Panc1 (cell line): ENCODE measurements at regions of chr10 and their contacts with region 1.

Region 1: DNA sequence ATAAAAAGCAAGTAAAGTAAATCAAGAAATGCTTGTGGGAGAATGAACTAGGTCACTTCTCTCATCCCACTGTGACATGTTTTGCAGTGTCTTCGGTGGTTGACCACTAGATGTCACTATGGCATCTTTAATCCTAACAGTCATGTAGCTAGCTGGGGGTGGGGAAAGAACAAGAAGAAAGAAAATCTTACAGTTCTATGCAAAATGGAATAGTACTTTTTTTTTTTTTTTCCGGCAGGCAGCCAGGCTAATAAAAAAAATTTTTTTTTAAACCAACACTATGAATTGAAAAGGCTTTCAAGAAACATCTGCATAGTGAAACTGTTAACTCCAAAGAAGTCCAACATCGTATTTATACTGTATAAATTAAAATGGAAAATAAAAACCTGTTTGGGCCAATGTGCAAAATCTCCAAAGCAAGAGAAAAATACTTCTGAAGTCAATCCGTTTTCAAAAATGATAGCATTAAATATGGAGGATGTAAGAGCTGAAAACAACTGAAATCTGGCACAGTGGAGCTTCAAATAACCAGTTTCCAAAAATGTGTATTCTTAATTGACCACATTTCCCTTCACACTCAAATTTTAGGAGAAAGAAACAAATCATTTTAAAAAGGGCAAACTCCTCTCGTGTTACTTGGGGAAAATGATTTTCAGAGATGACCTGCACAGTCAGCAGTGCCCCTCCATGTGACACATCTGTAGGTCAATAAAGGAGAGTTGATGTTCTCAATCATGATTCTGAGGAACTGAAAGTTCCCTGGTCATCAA is 38.5 kb downstream of the CDK1 start:
- DNase-seq: peak; percentile 72
- ATAC-seq: peak; percentile 90
- H3K4me3 ChIP-seq: no peak overlapping the region
- H3K27ac ChIP-seq: peak overlapping the region; percentile 44; the same call in 1 of the 2 replicates
- H3K4me1 ChIP-seq: peaks cover 3% of the 10 kb centered on the region; the same call in 1 of the 2 replicates
- H3K27me3 ChIP-seq: no peaks in the 10 kb centered on the region
- CTCF ChIP-seq: peak; percentile 80; the same call in 1 of the 2 replicates

Region 2: GRCh38 chr10:60611291-60611747 is 205.5 kb before region 1 on chr10:
- CTCF ChIA-PET with region 1: no interaction called
- POLR2A ChIA-PET with region 1: no interaction called
- in situ Hi-C with region 1: no loop called
- intact Hi-C with region 1: no loop called
- DNase-seq: peak; percentile 46
- ATAC-seq: peak; percentile 78
- H3K4me3 ChIP-seq: no peak overlapping the region
- H3K27ac ChIP-seq: no peak overlapping the region
- H3K4me1 ChIP-seq: no peaks in the 10 kb centered on the region
- H3K27me3 ChIP-seq: no peaks in the 10 kb centered on the region; the same call in none of the 2 replicates
- CTCF ChIP-seq: no peak

Region 3: GRCh38 chr10:60964257-60965235 is 147.7 kb after region 1 on chr10:
- CTCF ChIA-PET with region 1: no interaction called
- POLR2A ChIA-PET with region 1: no interaction called
- in situ Hi-C with region 1: no loop called
- intact Hi-C with region 1: loop called (anchors 1 kb)
- DNase-seq: peak; percentile 78
- ATAC-seq: peak; percentile 87
- H3K4me3 ChIP-seq: no peak overlapping the region
- H3K27ac ChIP-seq: no peak overlapping the region
- H3K4me1 ChIP-seq: peaks cover 11% of the 10 kb centered on the region
- H3K27me3 ChIP-seq: peaks cover 2% of the 10 kb centered on the region; the same call in 1 of the 2 replicates
- CTCF ChIP-seq: peak; percentile 94

Region 4: DNA sequence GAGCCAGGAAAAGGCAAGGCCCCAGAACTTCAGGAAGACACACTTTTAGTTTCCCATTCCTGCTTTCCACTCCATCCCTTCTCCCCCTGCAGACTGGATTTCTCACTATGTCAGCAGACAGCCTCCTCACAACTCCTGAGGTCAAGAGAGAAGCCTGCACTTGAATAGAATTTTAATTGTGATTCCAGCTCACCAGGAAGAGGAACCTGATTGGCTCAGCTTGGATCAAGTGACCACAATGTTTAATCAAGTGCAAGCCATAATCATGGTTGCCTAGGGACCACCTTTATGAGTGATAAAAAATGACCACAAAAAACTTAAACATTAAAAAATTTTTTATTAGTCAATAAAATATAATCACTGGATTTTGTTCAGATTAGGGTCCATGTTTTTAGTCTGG is 371.9 kb after region 1 on chr10:
- CTCF ChIA-PET with region 1: no interaction called
- POLR2A ChIA-PET with region 1: no interaction called
- in situ Hi-C with region 1: no loop called
- intact Hi-C with region 1: loop called (anchors 5 kb)
- DNase-seq: no peak
- ATAC-seq: no peak
- H3K4me3 ChIP-seq: no peak overlapping the region
- H3K27ac ChIP-seq: no peak overlapping the region
- H3K4me1 ChIP-seq: no peaks in the 10 kb centered on the region
- H3K27me3 ChIP-seq: no peaks in the 10 kb centered on the region
- CTCF ChIP-seq: no peak